HepG2 (cell line): ENCODE measurements at regions of chr7 and their contacts with region 1.

Region 1: GRCh38 chr7:139043823-139044812 is 8.3 kb upstream of the ZC3HAV1L start:
- DNase-seq: peak; percentile 16
- ATAC-seq: no peak
- H3K4me3 ChIP-seq: no peak overlapping the region
- H3K27ac ChIP-seq: no peak overlapping the region
- H3K4me1 ChIP-seq: peaks cover 11% of the 10 kb centered on the region; the same call in 1 of the 2 replicates
- H3K27me3 ChIP-seq: no peaks in the 10 kb centered on the region
- CTCF ChIP-seq: no peak
- EP300 ChIP-seq: no peak
- POLR2A ChIP-seq: no peak
- RAD21 ChIP-seq: no peak

Region 2: GRCh38 chr7:139016931-139017511 is 27.1 kb before region 1 on chr7:
- CTCF ChIA-PET with region 1: no interaction called
- POLR2A ChIA-PET with region 1: no interaction called
- in situ Hi-C with region 1: no loop called
- intact Hi-C with region 1: loop called (anchors 2 kb)
- DNase-seq: peak; percentile 68
- ATAC-seq: peak; percentile 96
- H3K4me3 ChIP-seq: no peak overlapping the region
- H3K27ac ChIP-seq: no peak overlapping the region
- H3K4me1 ChIP-seq: peaks cover 10% of the 10 kb centered on the region; the same call in 1 of the 2 replicates
- H3K27me3 ChIP-seq: peaks cover 0 to 22% of the 10 kb centered on the region in 2 experiments; a peak in 2 of 5 replicates
- CTCF ChIP-seq: peak; percentile 87
- EP300 ChIP-seq: no peak
- POLR2A ChIP-seq: no peak
- RAD21 ChIP-seq: peak; percentile 60

Region 3: DNA sequence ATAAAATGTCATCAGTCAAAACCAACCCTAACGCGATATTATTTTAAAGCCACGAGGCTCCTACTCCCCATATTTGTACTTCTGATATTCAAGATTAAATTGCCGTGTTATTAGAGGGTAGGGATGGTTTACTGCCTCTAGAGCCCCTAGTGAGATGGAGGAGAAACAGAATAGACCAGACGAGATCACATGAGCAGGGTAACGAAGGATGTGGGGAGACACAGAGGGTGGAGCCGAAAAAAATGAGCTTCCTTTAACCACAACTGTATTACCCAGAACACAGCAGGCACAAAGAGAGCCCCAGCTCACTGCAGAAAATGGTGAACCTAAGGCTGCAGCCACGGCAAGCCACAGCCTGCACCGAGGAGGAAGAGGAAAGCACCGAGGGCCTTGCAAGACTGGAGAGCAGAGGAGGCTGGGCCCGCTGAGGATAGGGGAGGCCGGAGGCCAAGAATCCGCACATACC is 51.1 kb after region 1 on chr7:
- CTCF ChIA-PET with region 1: no interaction called
- POLR2A ChIA-PET with region 1: no interaction called
- in situ Hi-C with region 1: no loop called
- intact Hi-C with region 1: no loop called
- DNase-seq: no peak
- ATAC-seq: no peak
- H3K4me3 ChIP-seq: no peak overlapping the region
- H3K27ac ChIP-seq: no peak overlapping the region
- H3K4me1 ChIP-seq: peaks cover 31% of the 10 kb centered on the region
- H3K27me3 ChIP-seq: no peaks in the 10 kb centered on the region
- CTCF ChIP-seq: no peak
- EP300 ChIP-seq: no peak
- POLR2A ChIP-seq: no peak
- RAD21 ChIP-seq: no peak